ENCODE measurements at regions of chr4 and their contacts with region 1.

Region 1: GRCh38 chr4:98928505-98929340 is at the start of gene EIF4E:
- DNase-seq: peak; percentile 99
- H3K4me3 Mint-ChIP-seq: peak within 1 kb of the TSS; percentile 96
- H3K27ac Mint-ChIP-seq: peak within 1 kb of the TSS; percentile 93
- H3K4me1 Mint-ChIP-seq: peaks cover 13% of the 10 kb centered on the region
- H3K27me3 Mint-ChIP-seq: no peaks in the 10 kb centered on the region
- CTCF ChIP-seq: no peak
- total RNA-seq, gene EIF4E: 104 and 106 TPM in 2 replicates

Region 2: DNA sequence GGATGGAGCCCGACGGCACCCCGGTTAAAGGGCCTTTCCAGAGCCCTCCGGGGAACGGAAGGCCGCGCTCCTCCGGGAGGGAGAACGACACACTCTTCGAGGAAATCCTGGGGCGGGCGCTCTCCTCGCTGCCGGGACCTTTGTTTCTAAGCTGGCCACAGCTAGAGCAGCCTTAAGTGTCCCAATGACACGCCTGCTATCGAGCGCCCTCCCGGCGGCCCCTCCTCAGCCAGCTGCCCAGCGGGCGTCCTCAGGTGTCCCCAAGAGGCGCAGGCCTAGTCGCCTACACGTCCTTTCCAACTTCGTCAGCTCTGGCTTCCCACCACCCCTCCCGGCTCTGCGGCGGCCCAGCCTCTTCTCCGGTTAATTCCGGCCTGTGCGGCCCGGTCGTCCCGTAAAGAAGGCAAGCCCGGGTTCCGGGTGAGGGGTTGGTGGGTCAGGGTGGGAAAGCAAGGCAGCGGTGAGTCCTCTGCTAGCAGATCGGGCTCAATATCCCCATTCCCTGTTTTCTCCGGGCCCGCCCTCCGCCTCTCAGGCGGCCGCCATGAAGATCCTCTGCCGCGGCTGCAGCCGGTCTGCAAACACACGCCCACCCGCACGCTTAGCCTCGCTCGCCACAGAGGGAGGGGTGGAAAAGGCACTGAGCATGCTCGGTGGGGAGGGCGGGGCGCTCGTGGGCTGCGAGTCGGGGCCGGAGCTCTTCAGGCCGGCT is 668.0 kb before region 1 on chr4:
- CTCF ChIA-PET with region 1: no interaction called
- POLR2A ChIA-PET with region 1: interaction called, 15 read pairs
- intact Hi-C with region 1: no loop called
- DNase-seq: peak; percentile 95
- H3K4me3 Mint-ChIP-seq: peak overlapping the region; percentile 89
- H3K27ac Mint-ChIP-seq: peak overlapping the region; percentile 86
- H3K4me1 Mint-ChIP-seq: peaks cover 35% of the 10 kb centered on the region
- H3K27me3 Mint-ChIP-seq: no peaks in the 10 kb centered on the region
- CTCF ChIP-seq: no peak

Region 3: DNA sequence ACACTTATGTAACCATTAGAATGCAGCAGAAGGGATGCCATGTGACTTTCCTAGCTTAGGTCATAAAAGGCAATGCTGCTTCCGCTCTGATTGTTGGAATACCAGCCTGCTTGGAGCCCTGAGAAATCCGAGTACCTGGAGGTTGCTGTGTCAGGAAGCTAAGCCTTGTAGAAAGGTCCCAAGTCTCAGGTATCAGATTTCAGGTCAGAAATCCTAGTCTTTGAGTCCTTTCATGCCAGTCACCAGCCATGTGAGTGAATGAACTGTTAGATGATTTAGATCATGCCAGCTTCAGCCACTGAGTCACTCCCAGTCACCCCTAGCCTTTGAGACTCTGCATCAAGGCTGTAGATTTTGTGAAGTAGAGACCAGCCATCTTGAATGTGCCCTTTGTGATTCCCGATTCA is 644.1 kb before region 1 on chr4:
- CTCF ChIA-PET with region 1: no interaction called
- POLR2A ChIA-PET with region 1: no interaction called
- intact Hi-C with region 1: no loop called
- DNase-seq: peak; percentile 52
- H3K4me3 Mint-ChIP-seq: no peak overlapping the region
- H3K27ac Mint-ChIP-seq: no peak overlapping the region
- H3K4me1 Mint-ChIP-seq: peaks cover 4% of the 10 kb centered on the region
- H3K27me3 Mint-ChIP-seq: no peaks in the 10 kb centered on the region
- CTCF ChIP-seq: no peak

Region 4: GRCh38 chr4:98864560-98864959 is 64.2 kb before region 1 on chr4:
- CTCF ChIA-PET with region 1: no interaction called
- POLR2A ChIA-PET with region 1: no interaction called
- intact Hi-C with region 1: no loop called
- DNase-seq: peak; percentile 33
- H3K4me3 Mint-ChIP-seq: no peak overlapping the region
- H3K27ac Mint-ChIP-seq: no peak overlapping the region
- H3K4me1 Mint-ChIP-seq: peaks cover 8% of the 10 kb centered on the region
- H3K27me3 Mint-ChIP-seq: no peaks in the 10 kb centered on the region
- CTCF ChIP-seq: no peak

Region 5: DNA sequence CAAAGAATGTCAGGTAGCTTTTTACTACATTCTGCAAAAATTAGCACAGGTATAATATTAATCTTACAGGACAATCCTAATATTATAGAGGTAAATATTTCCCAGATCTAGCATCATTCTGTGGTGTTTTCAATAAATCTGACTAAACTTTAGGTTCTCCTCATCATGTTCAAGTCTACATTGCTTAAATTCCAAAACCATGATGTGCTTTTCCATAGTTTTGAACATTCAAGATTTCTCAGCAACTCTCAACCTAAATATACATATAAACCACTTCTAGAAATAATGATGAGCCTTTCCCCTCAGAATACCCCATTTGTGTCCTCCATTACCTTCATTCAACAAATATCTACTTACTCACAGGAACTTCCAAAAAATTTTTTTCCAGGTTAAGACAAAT is 22.9 kb before region 1 on chr4:
- CTCF ChIA-PET with region 1: no interaction called
- POLR2A ChIA-PET with region 1: interaction called, 29 read pairs
- intact Hi-C with region 1: no loop called
- DNase-seq: no peak
- H3K4me3 Mint-ChIP-seq: no peak overlapping the region
- H3K27ac Mint-ChIP-seq: no peak overlapping the region
- H3K4me1 Mint-ChIP-seq: peaks cover 38% of the 10 kb centered on the region
- H3K27me3 Mint-ChIP-seq: no peaks in the 10 kb centered on the region
- CTCF ChIP-seq: no peak

Region 6: DNA sequence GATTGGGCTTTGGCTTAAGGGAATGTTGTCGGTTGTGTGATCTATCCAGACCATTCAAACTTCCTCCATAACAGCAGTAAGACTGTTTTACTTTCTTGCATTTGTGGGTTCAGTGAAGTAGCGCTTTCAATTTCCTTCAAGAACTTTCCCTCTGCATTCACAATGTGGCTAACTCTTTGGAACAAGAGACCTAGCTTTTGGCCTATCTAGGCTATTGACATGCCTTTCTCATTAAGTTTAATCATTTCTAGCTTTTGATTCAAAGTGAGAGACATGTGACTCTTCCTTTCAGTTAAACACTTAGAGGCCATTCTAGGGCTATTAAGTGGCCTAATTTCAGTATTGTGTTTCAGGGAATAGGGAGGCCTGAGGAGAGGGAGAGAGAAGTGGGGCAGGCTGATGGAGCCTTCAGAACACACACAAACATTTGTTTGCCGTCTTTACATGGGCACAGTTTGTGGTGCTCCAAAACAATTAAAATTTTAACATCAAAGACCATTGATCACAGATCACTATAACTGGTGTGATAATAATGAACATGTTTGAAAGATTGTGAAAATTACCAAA is 125.8 kb after region 1 on chr4:
- CTCF ChIA-PET with region 1: interaction called, 11 read pairs
- POLR2A ChIA-PET with region 1: interaction called, 22 read pairs
- intact Hi-C with region 1: loop called (anchors 5 kb)
- DNase-seq: no peak
- H3K4me3 Mint-ChIP-seq: no peak overlapping the region
- H3K27ac Mint-ChIP-seq: no peak overlapping the region
- H3K4me1 Mint-ChIP-seq: peaks cover 14% of the 10 kb centered on the region
- H3K27me3 Mint-ChIP-seq: no peaks in the 10 kb centered on the region
- CTCF ChIP-seq: no peak

Region 7: GRCh38 chr4:99088481-99089365 is 160.0 kb after region 1 on chr4 and contains the start of gene ADH5:
- CTCF ChIA-PET with region 1: no interaction called
- POLR2A ChIA-PET with region 1: interaction called, 42 read pairs
- intact Hi-C with region 1: no loop called
- DNase-seq: peak; percentile 84
- H3K4me3 Mint-ChIP-seq: peak within 1 kb of the TSS; percentile 89
- H3K27ac Mint-ChIP-seq: peak within 1 kb of the TSS; percentile 72
- H3K4me1 Mint-ChIP-seq: peaks cover 35% of the 10 kb centered on the region
- H3K27me3 Mint-ChIP-seq: no peaks in the 10 kb centered on the region
- CTCF ChIP-seq: no peak
- total RNA-seq, gene ADH5: 110 and 112 TPM in 2 replicates